ENCODE measurements at regions of chr3 and their contacts with region 1.

Region 1: DNA sequence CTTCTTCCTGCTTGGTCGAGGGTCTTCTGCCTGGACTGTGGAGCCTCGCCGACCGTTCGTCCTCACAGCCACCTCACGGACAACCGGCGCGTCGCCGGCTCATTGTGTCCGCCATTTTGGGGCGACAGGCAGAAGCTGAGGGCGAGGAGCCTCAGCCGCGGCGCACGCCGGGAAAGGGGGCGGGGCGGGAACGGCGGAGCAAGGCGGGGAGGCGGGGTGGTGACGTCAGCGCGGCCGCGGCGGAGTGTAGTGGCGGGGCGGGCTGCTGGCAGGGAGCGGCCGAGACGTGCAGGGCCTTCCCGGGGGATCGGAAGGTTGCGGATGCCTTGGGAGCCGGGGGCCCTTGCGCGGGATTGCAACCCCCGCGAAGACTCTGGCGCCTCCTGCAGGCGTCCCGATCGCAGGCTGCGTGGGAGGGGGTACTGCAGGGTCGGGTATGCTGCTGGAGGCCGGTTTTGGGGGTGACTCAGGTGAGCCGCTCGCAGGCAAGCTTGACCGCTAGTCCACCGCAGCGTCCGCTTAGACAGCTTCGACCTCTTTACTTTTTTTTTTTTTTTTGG is at the start of gene WDR82:
- DNase-seq: peak; percentile 94
- ATAC-seq: peak; percentile 86
- H3K4me3 ChIP-seq: peak within 1 kb of the TSS; percentile 76
- H3K27ac ChIP-seq: peak within 1 kb of the TSS; percentile 86
- H3K4me1 ChIP-seq: peaks cover 29% of the 10 kb centered on the region
- H3K27me3 ChIP-seq: no peaks in the 10 kb centered on the region
- CTCF ChIP-seq: peak; percentile 48; the same call in 1 of the 2 replicates
- total RNA-seq, gene WDR82: 56.2 and 56.4 TPM in 2 replicates

Region 2: DNA sequence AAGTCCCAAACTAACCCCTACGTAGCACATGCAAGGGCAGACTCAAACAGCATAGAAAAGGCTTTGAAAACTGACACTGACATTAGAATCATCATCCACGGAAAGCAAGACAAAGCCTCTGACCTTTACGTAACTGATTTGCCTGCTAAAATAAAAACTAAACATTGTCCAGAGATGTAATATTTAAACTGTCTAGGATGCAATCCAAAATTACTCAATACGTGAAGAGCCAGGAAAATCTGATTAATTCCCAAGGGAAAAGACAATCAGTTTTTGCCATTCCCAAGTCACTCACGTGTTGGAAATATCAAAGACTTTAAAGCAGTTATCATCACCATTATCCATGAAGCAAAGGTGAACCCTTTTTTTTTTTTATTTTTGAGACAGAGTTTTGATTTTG is 362.2 kb before region 1 on chr3:
- CTCF ChIA-PET with region 1: no interaction called
- POLR2A ChIA-PET with region 1: no interaction called
- intact Hi-C with region 1: no loop called
- DNase-seq: no peak
- ATAC-seq: no peak
- H3K4me3 ChIP-seq: no peak overlapping the region
- H3K27ac ChIP-seq: no peak overlapping the region
- H3K4me1 ChIP-seq: no peaks in the 10 kb centered on the region
- H3K27me3 ChIP-seq: no peaks in the 10 kb centered on the region
- CTCF ChIP-seq: no peak

Region 3: DNA sequence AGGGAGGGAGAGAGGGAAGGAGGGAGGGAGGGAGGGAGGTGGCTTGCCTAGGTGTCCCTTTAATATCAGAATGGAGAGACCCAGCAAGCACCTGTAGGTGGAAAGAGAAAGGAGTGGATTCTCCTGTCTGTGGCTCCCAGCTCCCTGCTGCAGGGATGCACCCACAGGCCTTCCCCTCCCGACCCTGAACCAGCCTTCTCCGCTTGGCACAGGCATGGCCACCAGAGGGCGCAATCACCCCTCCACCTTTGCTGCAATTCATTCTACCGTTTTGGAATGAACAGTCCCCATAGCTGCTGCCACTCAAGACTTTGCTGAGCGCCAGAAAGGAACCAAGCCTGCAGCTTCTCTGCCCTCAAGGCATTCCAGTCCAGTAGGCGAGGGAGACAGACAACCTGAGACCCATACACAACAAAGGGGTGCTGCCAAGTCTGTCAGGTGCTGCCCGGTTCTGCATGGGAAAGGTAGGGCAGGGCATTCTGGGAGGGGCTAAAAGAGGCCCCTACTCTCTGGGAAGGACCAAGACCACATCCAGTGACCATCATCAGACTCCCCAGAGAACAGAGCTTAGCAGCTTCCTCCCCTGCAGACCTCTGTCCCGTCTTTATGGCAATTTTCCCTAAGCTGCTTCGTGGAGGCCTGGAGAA is 58.1 kb before region 1 on chr3:
- CTCF ChIA-PET with region 1: no interaction called
- POLR2A ChIA-PET with region 1: no interaction called
- intact Hi-C with region 1: loop called (anchors 1 kb)
- DNase-seq: peak; percentile 93
- ATAC-seq: peak; percentile 45
- H3K4me3 ChIP-seq: no peak overlapping the region
- H3K27ac ChIP-seq: 0 out of 2 replicates have a peak overlapping the region, but pooled peaks have one; percentile 13
- H3K4me1 ChIP-seq: peaks cover 49% of the 10 kb centered on the region
- H3K27me3 ChIP-seq: no peaks in the 10 kb centered on the region
- CTCF ChIP-seq: peak; percentile 94

Region 4: DNA sequence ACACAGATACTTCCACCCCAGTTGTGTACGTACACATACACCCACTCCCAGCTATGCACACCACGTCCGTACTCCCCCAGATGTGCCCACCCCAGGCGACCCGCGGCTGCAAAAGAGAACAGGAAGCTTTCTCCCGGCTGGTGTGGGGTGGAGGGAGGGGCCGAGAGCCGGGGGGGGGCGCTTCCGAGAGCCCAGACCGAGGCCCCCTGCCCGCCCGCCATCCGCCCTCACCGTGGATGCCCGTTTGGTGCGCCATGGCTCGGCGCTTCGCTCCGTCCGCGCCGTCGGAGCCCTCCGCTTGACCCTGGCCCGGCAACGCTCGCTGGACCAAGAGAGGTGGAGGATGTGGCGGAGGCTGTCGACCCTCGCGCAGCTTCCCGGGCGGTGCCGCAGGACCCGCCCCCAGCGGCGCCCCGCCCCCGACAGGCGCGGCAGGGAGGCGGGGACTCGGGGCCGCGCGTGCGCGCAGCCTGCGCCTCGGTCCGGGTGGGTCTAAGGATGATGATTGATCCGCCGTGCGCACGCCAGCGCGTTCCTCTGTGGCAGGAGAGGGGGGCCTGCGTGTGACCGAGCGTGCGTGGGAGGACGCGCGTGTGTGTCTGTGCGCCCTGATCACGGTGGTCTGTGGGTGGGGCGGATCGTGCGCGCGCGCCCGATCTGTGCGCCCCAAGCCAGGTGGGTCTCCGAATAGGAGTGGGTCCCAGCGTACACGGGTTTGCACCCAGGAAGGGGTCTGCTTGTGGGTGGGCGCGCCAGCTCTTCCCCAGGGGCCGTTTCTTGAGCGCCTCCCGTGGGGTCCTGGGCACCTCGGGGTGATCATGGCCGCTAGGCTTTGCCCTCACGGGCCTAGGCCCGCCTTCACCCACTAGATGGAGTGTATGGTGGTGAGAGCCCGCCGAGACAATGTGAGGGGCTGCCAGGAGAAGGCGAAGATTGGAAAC is 39.6 kb before region 1 on chr3 and contains the start of gene TWF2:
- CTCF ChIA-PET with region 1: no interaction called
- POLR2A ChIA-PET with region 1: interaction called, 11 read pairs
- intact Hi-C with region 1: loop called (anchors 5 kb)
- DNase-seq: peak; percentile 86
- ATAC-seq: peak; percentile 64
- H3K4me3 ChIP-seq: peak within 1 kb of the TSS; percentile 97
- H3K27ac ChIP-seq: peak within 1 kb of the TSS; percentile 93
- H3K4me1 ChIP-seq: peaks cover 39% of the 10 kb centered on the region
- H3K27me3 ChIP-seq: no peaks in the 10 kb centered on the region
- CTCF ChIP-seq: peak; percentile 37; the same call in 1 of the 2 replicates
- total RNA-seq, gene TWF2: 147 and 166 TPM in 2 replicates

Region 5: DNA sequence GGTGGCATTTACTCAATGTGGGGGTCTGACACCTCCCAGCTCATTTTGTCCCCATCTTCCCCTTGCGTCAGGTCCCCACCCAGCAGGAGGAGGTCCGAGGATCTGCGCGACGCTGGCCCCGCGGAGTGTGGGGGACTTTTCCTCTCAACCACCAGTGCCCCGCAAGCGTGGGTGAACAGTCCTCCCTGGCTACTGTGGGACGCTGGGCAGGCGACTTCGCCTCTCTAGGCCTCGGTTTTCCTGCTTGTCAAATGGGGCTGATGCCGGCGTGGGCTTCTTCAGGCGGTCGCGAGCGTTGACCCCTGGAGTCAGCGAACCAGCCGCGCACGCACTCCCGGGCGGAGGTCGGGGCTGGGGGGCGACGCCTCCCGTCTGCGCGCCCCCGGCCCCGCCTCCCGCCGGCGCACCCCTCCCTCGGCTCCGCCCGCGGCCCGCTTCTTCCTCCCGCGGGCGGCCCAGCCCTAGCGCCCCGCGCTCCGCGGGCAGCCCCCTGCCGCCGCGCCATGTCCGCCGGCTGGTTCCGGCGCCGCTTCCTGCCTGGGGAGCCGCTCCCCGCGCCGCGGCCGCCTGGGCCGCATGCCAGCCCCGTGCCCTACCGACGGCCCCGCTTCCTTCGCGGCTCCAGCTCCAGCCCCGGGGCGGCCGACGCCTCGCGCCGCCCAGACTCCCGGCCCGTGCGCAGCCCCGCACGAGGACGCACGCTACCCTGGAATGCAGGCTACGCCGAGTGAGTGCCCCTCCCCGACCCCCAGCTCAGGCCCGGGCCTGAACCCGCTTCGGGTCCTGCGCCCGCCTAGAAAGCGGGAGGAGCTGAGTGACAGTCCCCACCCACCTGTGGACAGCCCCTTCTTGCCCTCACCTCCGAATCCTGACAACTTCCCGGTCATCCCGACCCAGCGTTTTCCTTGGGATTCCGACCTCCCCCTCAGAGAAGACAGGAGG is 33.0 kb before region 1 on chr3 and contains the start of gene PPM1M:
- CTCF ChIA-PET with region 1: interaction called, 4 read pairs
- POLR2A ChIA-PET with region 1: interaction called, 16 read pairs
- intact Hi-C with region 1: no loop called
- DNase-seq: peak; percentile 62
- ATAC-seq: peak; percentile 54
- H3K4me3 ChIP-seq: peak within 1 kb of the TSS; percentile 76
- H3K27ac ChIP-seq: no peak within 1 kb of the TSS
- H3K4me1 ChIP-seq: peaks cover 31% of the 10 kb centered on the region
- H3K27me3 ChIP-seq: no peaks in the 10 kb centered on the region
- CTCF ChIP-seq: no peak
- total RNA-seq, gene PPM1M: 8.5 and 12.4 TPM in 2 replicates

Region 6: GRCh38 chr3:52291508-52292181 is 13.1 kb after region 1 on chr3:
- CTCF ChIA-PET with region 1: no interaction called
- POLR2A ChIA-PET with region 1: interaction called, 11 read pairs
- intact Hi-C with region 1: no loop called
- DNase-seq: peak; percentile 45
- ATAC-seq: 0 out of 2 replicates have a peak, but pooled peaks have one; percentile 9
- H3K4me3 ChIP-seq: no peak overlapping the region
- H3K27ac ChIP-seq: no peak overlapping the region
- H3K4me1 ChIP-seq: peaks cover 13% of the 10 kb centered on the region
- H3K27me3 ChIP-seq: no peaks in the 10 kb centered on the region
- CTCF ChIP-seq: peak; percentile 87

Region 7: GRCh38 chr3:52705688-52706686 is 427.4 kb after region 1 on chr3 and contains the starts of genes GLT8D1 and SPCS1:
- CTCF ChIA-PET with region 1: no interaction called
- POLR2A ChIA-PET with region 1: interaction called, 20 read pairs
- intact Hi-C with region 1: no loop called
- DNase-seq: peak; percentile 86
- ATAC-seq: peak; percentile 91
- H3K4me3 ChIP-seq: peak within 1 kb of the TSS; percentile 95
- H3K27ac ChIP-seq: peak within 1 kb of the TSS; percentile 36
- H3K4me1 ChIP-seq: peaks cover 18% of the 10 kb centered on the region
- H3K27me3 ChIP-seq: no peaks in the 10 kb centered on the region
- CTCF ChIP-seq: no peak
- total RNA-seq, gene GLT8D1: 53.6 and 70.2 TPM in 2 replicates
- total RNA-seq, gene SPCS1: 114 and 133 TPM in 2 replicates

Measured in PC-3 (cell line).